Keratinocyte (primary cell): ENCODE measurements at regions of chr1 and their contacts with region 1.

Region 1: GRCh38 chr1:24987875-24988557 is 57.9 kb upstream of the RUNX3 start:
- DNase-seq: no peak
- H3K4me3 ChIP-seq: no peak overlapping the region
- H3K27ac ChIP-seq: no peak overlapping the region
- H3K4me1 ChIP-seq: no peaks in the 10 kb centered on the region
- H3K27me3 ChIP-seq: peaks cover 7% of the 10 kb centered on the region
- CTCF ChIP-seq: no peak

Region 2: GRCh38 chr1:24888971-24889676 is 98.9 kb before region 1 on chr1:
- dilution Hi-C with region 1: no loop called
- DNase-seq: no peak
- H3K4me3 ChIP-seq: no peak overlapping the region
- H3K27ac ChIP-seq: no peak overlapping the region
- H3K4me1 ChIP-seq: no peaks in the 10 kb centered on the region
- H3K27me3 ChIP-seq: peaks cover 2% of the 10 kb centered on the region
- CTCF ChIP-seq: no peak

Region 3: DNA sequence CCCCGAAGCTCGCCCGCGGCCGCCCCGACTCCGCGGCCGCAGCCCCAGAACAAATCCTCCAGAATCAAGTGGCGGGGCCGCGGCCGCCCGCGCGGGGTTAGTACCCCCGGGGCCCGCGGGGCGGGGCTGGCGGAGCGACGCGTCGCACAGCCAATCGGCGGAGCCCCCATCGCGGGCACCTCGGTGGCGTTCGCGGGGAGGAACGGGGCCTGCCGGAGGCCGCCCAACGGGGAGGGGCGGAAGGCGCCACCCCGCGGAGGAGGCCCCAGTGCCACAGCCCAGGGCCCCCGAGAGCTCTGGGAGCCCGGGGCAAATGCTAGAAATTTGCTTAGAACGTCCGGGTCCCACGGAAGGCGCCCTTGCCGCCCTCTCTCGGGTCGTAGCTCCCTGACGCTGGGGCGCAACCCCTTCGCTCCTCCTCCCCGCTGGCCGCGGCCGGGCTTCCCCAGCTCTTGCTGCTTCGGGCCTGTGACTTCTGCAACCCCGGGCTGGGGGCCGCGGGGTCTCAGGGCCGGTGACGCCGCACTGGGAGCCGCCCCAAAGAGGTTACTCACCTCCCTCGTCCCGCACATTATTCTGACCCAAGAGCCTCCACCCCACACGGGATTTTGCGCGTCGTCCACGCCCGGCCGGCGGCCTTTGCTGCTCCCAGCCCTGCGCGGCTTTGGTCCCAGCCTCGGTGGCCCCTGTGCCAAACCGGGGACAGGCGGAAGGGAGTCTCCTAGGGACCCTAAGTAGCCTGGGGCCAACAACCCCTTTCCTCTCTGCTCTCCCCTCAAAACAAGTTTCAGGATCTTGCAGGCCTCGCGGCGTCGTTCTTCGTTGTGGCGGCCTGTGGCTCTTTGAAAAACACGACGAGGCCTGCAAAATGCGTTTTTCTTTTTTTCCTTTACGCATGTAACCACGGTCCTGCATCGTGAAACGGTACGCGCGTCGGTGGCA is 57.5 kb before region 1 on chr1 and contains the start of gene RUNX3:
- dilution Hi-C with region 1: loop called (anchors 10 kb)
- DNase-seq: no peak
- H3K4me3 ChIP-seq: peak within 1 kb of the TSS in 1 of 3 experiments; percentile 34
- H3K27ac ChIP-seq: no peak within 1 kb of the TSS
- H3K4me1 ChIP-seq: peaks cover 6% of the 10 kb centered on the region
- H3K27me3 ChIP-seq: peaks cover 93% of the 10 kb centered on the region
- CTCF ChIP-seq: no peak
- polyA plus RNA-seq, gene RUNX3: 0.01 to 0.10 TPM in 2 of 3 replicates, not detected in the other

Region 4: GRCh38 chr1:25042331-25043227 is 54.6 kb after region 1 on chr1:
- dilution Hi-C with region 1: loop called (anchors 10 kb)
- DNase-seq: peak; percentile 48
- H3K4me3 ChIP-seq: no peak overlapping the region
- H3K27ac ChIP-seq: no peak overlapping the region
- H3K4me1 ChIP-seq: peaks cover 10% of the 10 kb centered on the region
- H3K27me3 ChIP-seq: peaks cover 8% of the 10 kb centered on the region
- CTCF ChIP-seq: peak in 1 of 3 experiments; percentile 37

Region 5: DNA sequence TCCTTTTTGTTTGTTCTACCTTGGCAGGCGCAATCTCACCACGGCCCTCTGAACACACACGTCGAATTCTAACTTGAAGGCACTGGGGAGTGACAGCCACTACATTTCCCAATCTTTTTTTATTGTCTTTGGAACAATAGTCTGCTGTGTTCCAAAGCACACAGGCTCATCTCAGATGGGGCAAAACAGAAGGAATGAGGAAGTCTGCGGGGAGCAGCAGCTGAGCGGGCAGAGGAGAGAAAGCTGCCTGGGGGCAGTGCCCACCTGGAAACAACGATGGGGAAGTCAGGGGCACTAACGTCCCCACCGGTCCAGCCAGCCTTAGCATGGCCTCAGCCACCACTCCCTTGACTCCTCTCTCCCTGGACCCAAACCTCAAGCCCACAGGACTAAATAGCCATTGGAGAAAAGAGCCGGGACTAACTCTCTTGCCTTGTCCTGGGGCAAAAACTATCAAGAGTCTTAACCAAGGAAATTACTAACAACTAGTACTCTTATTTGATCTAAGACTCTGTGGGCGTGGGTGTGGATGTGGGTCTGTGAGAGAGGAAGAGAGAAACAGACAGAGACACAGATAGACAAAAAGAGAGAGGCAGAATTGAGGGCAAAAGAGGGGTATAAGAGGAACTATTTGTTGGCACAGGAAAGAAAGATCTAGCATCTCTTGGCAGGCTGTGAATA is 210.1 kb after region 1 on chr1:
- dilution Hi-C with region 1: no loop called
- DNase-seq: no peak
- H3K4me3 ChIP-seq: no peak overlapping the region
- H3K27ac ChIP-seq: no peak overlapping the region
- H3K4me1 ChIP-seq: peaks cover 29% of the 10 kb centered on the region
- H3K27me3 ChIP-seq: no peaks in the 10 kb centered on the region
- CTCF ChIP-seq: no peak